Posterior vena cava (tissue), 2 donors: ENCODE measurements at regions of chr3 and their contacts with region 1.

Region 1: GRCh38 chr3:186069199-186069598 is 39.7 kb downstream of the ETV5 start:
- DNase-seq: no peak

Region 2: DNA sequence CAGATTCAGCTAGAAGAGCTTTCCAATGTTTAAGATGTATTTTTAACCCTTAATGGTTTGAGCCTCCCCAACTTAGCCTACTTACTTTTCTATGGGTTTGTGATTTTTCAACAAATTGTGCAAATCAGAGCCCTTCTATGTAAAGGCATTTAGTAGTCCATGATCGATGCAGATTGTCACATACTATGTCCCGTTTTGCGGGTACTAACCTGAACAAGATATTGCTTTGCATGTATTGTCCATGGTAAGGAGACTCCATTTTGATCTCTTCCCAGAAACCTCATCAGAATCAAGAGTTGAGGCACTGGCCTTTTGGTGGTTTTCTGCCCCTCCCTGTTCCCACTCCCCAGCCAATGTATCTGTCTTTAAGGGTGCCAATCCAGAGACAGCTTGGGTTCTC is 21.1 kb before region 1 on chr3:
- intact Hi-C with region 1: loop called in 1 of 2 experiments (anchors 1 kb)
- DNase-seq: no peak